H1 (cell line): ENCODE measurements at regions of chr2 and their contacts with region 1.

Region 1: DNA sequence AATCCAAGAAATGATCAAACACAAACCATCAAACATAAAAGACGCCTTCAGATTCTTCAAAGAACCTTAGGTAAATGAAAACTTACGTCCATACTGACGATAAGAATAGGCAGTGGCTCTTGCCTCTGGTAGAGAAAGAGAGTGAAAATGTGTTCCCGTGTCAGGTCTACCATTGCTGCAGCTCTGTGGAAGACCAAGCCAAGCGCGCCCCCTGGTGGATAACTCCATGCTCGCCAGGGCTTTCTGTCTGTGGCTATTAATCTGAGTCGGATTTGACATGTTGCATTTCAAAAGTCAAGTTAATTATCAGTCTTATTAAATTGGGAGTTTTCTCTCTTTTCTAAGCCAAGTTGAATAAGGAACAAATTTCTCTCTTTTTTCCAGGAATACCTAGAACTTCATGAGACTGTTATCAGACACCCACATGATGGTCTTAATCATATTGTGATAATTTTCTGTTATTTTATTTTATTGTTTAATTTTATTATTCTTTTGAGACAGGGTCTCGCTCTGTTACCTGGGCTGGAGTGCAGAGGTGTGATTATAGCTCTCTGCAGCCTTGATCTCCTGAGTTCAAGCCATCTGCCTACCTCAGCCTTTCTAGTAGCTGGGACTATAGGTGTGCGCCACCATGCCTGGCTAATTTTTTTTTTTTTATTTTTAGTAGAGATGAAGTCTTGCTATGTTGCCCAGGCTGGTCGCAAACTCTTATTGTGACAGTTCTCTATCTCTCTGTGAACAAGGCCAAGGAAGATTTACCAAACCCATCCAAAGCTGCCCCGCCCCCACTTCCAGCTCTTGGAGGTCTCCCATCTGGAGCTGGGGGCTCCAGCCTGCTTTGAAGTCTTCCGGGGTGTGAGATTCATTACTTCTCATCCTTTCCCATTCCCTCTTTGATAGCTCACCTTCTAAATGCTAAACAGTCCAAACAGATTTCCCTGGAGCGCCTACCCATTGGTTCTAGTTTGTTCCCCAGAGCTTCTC is 15.8 kb upstream of the ZAP70 start:
- DNase-seq: peak; percentile 67 to 95
- H3K4me3 ChIP-seq: no peak overlapping the region
- H3K27ac ChIP-seq: no peak overlapping the region
- H3K4me1 ChIP-seq: peaks cover 0 to 2% (median 0%) of the 10 kb centered on the region in 4 experiments; a peak in 2 of 7 replicates
- H3K27me3 ChIP-seq: no peaks in the 10 kb centered on the region; a peak in 1 of 7 replicates
- CTCF ChIP-seq: peak; percentile 80 to 98 (median 88)
- EP300 ChIP-seq: no peak
- POLR2A ChIP-seq: no peak
- RAD21 ChIP-seq: peak; percentile 97 to 100

Region 2: DNA sequence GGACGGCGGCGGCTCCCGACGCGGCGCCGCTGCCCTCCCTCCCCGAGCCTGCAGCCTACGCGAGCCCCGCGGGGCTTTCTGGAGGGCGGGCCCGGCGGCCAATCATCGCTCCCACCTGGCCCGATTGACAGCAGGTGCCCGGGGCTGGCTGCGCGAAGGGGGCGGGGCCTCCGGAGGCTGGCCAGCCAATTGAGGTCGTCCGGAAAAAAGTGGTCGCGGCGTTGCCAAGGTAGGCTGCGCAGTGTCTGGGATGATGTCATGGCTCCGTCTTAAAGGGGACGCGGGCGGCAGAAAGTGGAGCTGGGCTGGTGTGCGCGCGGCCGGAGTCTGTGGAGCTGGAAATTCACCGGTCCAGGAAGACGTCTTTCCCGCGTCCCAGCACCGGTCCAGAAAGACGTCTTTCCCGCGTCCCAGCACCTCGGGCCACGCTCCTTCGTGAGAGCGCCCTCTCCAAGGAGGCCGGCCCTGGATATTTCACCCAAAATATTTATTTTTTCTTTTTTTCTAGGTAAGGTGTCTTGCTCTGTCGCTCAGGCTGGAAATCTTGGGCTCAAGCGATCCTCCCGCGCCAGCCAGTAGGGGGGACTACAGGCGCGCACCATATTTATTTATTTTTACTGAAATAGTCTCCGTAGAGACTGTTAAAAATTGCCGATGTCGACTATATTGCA is 33.4 kb before region 1 on chr2 and contains the start of gene ACTR1B:
- CTCF ChIA-PET with region 1: interaction called, 132 read pairs
- POLR2A ChIA-PET with region 1: interaction called, 4 read pairs
- DNase-seq: peak; percentile 95 to 97
- H3K4me3 ChIP-seq: peak within 1 kb of the TSS; percentile 76 to 82 (median 79)
- H3K27ac ChIP-seq: peak within 1 kb of the TSS; percentile 87
- H3K4me1 ChIP-seq: peaks cover 0 to 9% (median 7%) of the 10 kb centered on the region in 4 experiments; a peak in 4 of 7 replicates
- H3K27me3 ChIP-seq: no peaks in the 10 kb centered on the region
- CTCF ChIP-seq: peak in 1 of 3 experiments; percentile 35; a peak in 1 of 4 replicates
- EP300 ChIP-seq: no peak
- POLR2A ChIP-seq: peak in 1 of 2 experiments; percentile 89; a peak in 2 of 3 replicates
- RAD21 ChIP-seq: peak; percentile 34 to 42
- total RNA-seq, gene ACTR1B: 40.7 and 43.8 TPM in 2 replicates

Region 3: DNA sequence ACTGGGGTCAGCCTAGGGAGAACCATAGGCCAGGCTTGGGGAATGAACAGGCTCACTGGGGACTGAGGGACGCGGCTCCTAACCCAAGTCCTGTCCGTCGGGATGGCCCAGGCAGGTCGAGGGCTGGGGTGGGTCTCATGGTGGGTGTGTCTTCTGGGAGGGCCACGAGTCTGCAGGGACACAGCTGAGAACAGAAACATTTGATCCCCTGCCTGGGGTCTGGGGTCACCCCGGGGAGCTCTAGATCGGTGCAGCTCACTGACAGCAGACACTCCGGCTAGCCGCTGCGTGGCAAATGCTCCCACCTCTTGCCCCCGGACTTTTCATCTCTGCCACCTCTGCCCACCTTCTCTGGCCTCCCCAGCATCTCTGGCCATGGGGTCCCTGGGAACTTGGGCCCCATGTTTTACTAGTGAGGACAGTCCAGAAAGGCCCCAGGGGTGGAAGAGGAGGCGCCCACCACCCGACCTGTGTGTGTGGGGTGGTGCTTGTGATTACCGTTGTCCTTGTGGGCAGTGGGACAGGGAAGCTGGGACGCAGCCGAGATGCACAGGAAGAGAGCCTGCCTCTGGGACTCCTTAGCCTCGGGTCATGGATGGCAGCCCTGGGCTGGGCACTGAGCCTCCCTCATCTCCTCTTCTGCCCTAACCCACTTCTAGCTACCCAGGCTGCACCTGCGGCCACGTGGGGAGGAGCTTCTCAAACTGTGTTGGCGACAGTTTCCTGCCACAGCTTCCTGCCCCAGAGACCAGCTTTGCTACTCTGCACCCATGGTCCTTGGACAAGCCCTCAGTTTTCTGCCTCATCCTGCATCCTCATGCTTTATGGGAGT is 20.7 kb after region 1 on chr2:
- CTCF ChIA-PET with region 1: interaction called, 202 read pairs
- POLR2A ChIA-PET with region 1: no interaction called
- DNase-seq: no peak
- H3K4me3 ChIP-seq: no peak overlapping the region
- H3K27ac ChIP-seq: no peak overlapping the region
- H3K4me1 ChIP-seq: peaks cover 2 to 13% (median 3%) of the 10 kb centered on the region in 4 experiments; a peak in 6 of 7 replicates
- H3K27me3 ChIP-seq: no peaks in the 10 kb centered on the region
- CTCF ChIP-seq: no peak
- EP300 ChIP-seq: no peak
- POLR2A ChIP-seq: no peak
- RAD21 ChIP-seq: no peak

Region 4: DNA sequence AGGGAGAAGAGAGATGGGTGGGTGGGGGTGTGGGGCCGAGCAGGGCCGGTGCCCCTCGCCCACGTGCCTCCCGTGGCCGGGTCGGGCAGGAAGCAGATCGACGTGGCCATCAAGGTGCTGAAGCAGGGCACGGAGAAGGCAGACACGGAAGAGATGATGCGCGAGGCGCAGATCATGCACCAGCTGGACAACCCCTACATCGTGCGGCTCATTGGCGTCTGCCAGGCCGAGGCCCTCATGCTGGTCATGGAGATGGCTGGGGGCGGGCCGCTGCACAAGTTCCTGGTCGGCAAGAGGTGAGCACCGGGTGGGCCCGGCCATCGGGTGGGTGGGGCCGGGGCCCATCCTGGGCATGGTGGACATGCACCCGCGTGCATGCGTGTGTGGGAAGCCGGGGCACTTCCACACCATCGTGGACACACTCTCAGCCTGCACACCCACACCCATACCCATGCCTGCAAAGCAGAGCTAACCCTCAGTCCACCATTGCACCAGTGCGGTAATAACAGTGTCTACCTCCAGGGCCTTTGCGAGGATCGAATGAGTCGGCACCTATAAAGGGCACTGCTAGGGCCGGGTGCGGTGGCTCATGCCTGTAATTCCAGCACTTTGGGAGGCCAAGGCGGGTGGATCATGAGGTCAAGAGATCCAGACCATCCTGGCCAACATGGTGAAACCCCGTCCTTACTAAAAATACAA is 37.8 kb after region 1 on chr2:
- CTCF ChIA-PET with region 1: interaction called, 149 read pairs
- POLR2A ChIA-PET with region 1: no interaction called
- DNase-seq: no peak
- H3K4me3 ChIP-seq: no peak overlapping the region
- H3K27ac ChIP-seq: no peak overlapping the region
- H3K4me1 ChIP-seq: no peaks in the 10 kb centered on the region
- H3K27me3 ChIP-seq: no peaks in the 10 kb centered on the region
- CTCF ChIP-seq: no peak
- EP300 ChIP-seq: no peak
- POLR2A ChIP-seq: no peak
- RAD21 ChIP-seq: no peak

Region 5: DNA sequence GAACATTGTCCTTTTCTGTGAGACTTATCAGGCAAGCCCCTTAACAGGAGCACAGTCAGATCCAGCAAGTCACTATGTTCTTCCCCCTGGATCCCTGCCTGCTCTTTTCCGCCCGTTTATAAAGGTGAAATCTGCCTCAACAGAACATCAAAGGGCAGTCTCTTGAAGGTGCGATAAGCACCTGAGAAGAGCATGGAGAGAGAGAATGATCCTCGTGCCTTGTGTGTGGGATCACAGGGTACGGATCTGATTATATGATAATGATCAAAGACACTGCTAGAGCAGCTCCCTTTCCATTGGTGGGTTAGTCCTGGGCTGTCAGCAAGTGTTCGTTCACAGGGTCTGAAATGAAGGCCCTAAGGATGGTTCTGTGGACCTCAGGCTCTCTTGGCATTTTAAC is 122.2 kb after region 1 on chr2:
- CTCF ChIA-PET with region 1: no interaction called
- POLR2A ChIA-PET with region 1: no interaction called
- DNase-seq: no peak
- H3K4me3 ChIP-seq: no peak overlapping the region
- H3K27ac ChIP-seq: no peak overlapping the region
- H3K4me1 ChIP-seq: peaks cover 0 to 22% (median 1%) of the 10 kb centered on the region in 4 experiments; a peak in 3 of 7 replicates
- H3K27me3 ChIP-seq: no peaks in the 10 kb centered on the region
- CTCF ChIP-seq: no peak
- EP300 ChIP-seq: no peak
- POLR2A ChIP-seq: no peak
- RAD21 ChIP-seq: no peak